Naive thymus-derived CD4-positive, alpha-beta T cell (primary cell): ENCODE measurements at regions of chr9 and their contacts with region 1.

Region 1: GRCh38 chr9:123225374-123225813 is 43.0 kb downstream of the STRBP start:
- DNase-seq: peak in 8 of 9 donors; percentile 14 to 67 (median 38)
- ATAC-seq: peak; percentile 93
- H3K4me3 ChIP-seq: no peak overlapping the region
- H3K4me3 Mint-ChIP-seq: peak overlapping the region in 3 of 10 donors; percentile 1 to 24 (median 6)
- H3K27ac ChIP-seq: no peak overlapping the region
- H3K27ac Mint-ChIP-seq: peak overlapping the region in 6 of 9 donors; percentile 2 to 48 (median 34)
- H3K4me1 ChIP-seq: peaks cover 7 to 9% of the 10 kb centered on the region in 2 donors
- H3K4me1 Mint-ChIP-seq: peaks cover 10 to 31% (median 18%) of the 10 kb centered on the region in 7 donors
- H3K27me3 ChIP-seq: no peaks in the 10 kb centered on the region
- H3K27me3 Mint-ChIP-seq: no peaks in the 10 kb centered on the region

Region 2: GRCh38 chr9:123053711-123054110 is 171.7 kb before region 1 on chr9:
- CTCF ChIA-PET with region 1: no interaction called
- POLR2A ChIA-PET with region 1: no interaction called
- intact Hi-C with region 1: no loop called
- DNase-seq: no peak
- ATAC-seq: no peak
- H3K4me3 ChIP-seq: no peak overlapping the region
- H3K4me3 Mint-ChIP-seq: no peak overlapping the region
- H3K27ac ChIP-seq: no peak overlapping the region
- H3K27ac Mint-ChIP-seq: no peak overlapping the region
- H3K4me1 ChIP-seq: no peaks in the 10 kb centered on the region
- H3K4me1 Mint-ChIP-seq: peaks cover 0 to 6% (median 0%) of the 10 kb centered on the region in 7 donors
- H3K27me3 ChIP-seq: no peaks in the 10 kb centered on the region
- H3K27me3 Mint-ChIP-seq: no peaks in the 10 kb centered on the region

Region 3: GRCh38 chr9:123081824-123082223 is 143.6 kb before region 1 on chr9:
- CTCF ChIA-PET with region 1: no interaction called
- POLR2A ChIA-PET with region 1: no interaction called
- intact Hi-C with region 1: loop called in 1 of 2 experiments (anchors 10 kb)
- DNase-seq: peak in 6 of 9 donors; percentile 15 to 38 (median 30)
- ATAC-seq: peak; percentile 32
- H3K4me3 ChIP-seq: no peak overlapping the region
- H3K4me3 Mint-ChIP-seq: no peak overlapping the region
- H3K27ac ChIP-seq: no peak overlapping the region
- H3K27ac Mint-ChIP-seq: no peak overlapping the region
- H3K4me1 ChIP-seq: no peaks in the 10 kb centered on the region
- H3K4me1 Mint-ChIP-seq: peaks cover 0 to 5% (median 0%) of the 10 kb centered on the region in 7 donors
- H3K27me3 ChIP-seq: no peaks in the 10 kb centered on the region
- H3K27me3 Mint-ChIP-seq: no peaks in the 10 kb centered on the region

Region 4: DNA sequence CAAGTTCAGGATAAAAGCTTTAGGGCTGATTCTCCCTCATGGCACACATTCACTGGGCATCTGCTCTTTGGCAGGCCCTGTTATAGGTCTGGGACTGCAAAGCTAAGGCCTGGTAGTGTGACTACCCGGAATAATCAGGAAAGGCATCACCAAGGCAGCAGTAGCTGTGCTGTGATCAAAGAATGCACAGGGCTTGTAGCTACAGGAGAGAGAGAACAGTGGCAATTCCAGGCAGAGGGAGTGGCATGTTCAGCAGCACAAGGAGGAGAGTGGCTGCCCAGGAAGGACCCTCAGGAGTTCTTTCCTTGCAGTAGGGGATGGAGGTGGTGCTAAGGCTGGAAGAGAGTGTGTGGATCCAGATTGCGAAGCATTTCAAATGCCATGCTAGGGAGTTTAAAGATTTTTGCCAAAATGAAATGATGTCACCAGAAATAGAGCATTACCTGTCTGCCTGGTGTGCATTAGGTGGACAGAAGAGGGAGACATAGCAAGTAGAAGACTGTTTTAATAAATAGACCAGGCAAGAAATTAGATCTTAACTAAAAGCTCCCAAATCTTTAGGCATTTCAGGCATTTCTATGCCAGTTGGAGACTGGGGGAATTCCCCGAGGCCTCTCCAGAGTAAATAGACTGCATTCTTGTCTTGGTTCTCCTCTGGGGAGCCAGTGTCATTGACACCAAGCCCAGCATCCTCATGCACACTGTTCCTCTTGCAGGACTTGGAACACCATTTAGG is 122.9 kb before region 1 on chr9:
- CTCF ChIA-PET with region 1: no interaction called
- POLR2A ChIA-PET with region 1: no interaction called
- intact Hi-C with region 1: loop called in 1 of 2 experiments (anchors 10 kb)
- DNase-seq: no peak
- ATAC-seq: no peak
- H3K4me3 ChIP-seq: no peak overlapping the region
- H3K4me3 Mint-ChIP-seq: no peak overlapping the region
- H3K27ac ChIP-seq: no peak overlapping the region
- H3K27ac Mint-ChIP-seq: peak overlapping the region in 5 of 9 donors; percentile 9 to 68 (median 52)
- H3K4me1 ChIP-seq: no peaks in the 10 kb centered on the region
- H3K4me1 Mint-ChIP-seq: no peaks in the 10 kb centered on the region
- H3K27me3 ChIP-seq: no peaks in the 10 kb centered on the region
- H3K27me3 Mint-ChIP-seq: no peaks in the 10 kb centered on the region